K562 (cell line): ENCODE measurements at regions of chr1 and their contacts with region 1.

Region 1: GRCh38 chr1:173269490-173270230 is 62.5 kb upstream of the TNFSF4 start:
- DNase-seq: peak in 2 of 4 experiments; percentile 63 to 69
- ATAC-seq: peak; percentile 97
- H3K4me3 ChIP-seq: no peak overlapping the region
- H3K27ac ChIP-seq: peak overlapping the region; percentile 52; the same call in 2 of the 3 replicates
- H3K4me1 ChIP-seq: peaks cover 0 to 29% of the 10 kb centered on the region in 2 experiments; a peak in 3 of 5 replicates
- H3K27me3 ChIP-seq: no peaks in the 10 kb centered on the region
- CTCF ChIP-seq: no peak
- EP300 ChIP-seq: peak; percentile 90
- POLR2A ChIP-seq: no peak
- RAD21 ChIP-seq: peak; percentile 25 to 41

Region 2: GRCh38 chr1:173301507-173301906 is 31.8 kb after region 1 on chr1:
- CTCF ChIA-PET with region 1: no interaction called
- POLR2A ChIA-PET with region 1: no interaction called
- in situ Hi-C with region 1: no loop called
- intact Hi-C with region 1: loop called (anchors 5 kb)
- DNase-seq: peak; percentile 25 to 59 (median 30)
- ATAC-seq: peak; percentile 61
- H3K4me3 ChIP-seq: no peak overlapping the region
- H3K27ac ChIP-seq: no peak overlapping the region
- H3K4me1 ChIP-seq: peaks cover 5 to 39% of the 10 kb centered on the region in 2 experiments
- H3K27me3 ChIP-seq: no peaks in the 10 kb centered on the region
- CTCF ChIP-seq: no peak
- EP300 ChIP-seq: no peak
- POLR2A ChIP-seq: no peak
- RAD21 ChIP-seq: no peak

Region 3: DNA sequence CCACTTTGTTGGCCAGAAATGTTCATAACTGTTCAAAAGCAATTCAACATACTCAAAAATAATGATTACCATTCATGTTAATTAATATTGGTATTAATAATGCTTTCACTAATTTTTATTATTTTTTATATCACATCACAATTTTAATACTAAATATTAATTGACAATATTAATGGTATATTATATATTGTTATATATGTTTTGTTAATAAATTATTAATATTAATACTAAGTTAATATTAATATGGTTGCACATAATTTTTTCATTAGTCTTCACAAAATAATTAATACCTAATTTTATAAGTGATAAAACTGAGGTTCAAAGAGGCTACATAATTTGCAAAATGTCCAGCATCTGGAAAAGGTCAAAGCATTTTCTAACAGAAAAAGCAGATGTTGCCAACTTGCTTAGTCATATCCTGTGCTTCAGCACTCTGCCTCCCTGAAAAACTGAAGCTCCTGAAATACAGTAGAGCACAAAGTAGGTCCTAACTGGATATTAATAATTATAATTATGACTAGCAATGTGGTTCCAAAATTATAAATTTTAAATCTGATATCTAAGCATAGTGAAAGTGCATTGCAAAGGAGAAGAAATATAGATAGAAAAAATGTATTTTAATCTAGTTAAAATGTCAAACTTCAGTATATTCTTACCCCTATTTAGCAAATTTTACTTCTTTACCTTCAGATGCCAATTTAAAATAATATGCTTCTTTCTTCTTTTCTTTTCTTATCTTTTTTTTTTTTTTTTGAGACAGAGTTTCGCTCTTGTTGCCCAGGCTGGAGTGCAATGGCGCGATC is 60.7 kb after region 1 on chr1:
- CTCF ChIA-PET with region 1: no interaction called
- POLR2A ChIA-PET with region 1: no interaction called
- in situ Hi-C with region 1: no loop called
- intact Hi-C with region 1: loop called (anchors 5 kb)
- DNase-seq: peak; percentile 21 to 84 (median 47)
- ATAC-seq: peak; percentile 91
- H3K4me3 ChIP-seq: no peak overlapping the region
- H3K27ac ChIP-seq: peak overlapping the region; percentile 75; the same call in 2 of the 3 replicates
- H3K4me1 ChIP-seq: peaks cover 0 to 32% of the 10 kb centered on the region in 2 experiments; a peak in 4 of 5 replicates
- H3K27me3 ChIP-seq: no peaks in the 10 kb centered on the region
- CTCF ChIP-seq: no peak
- EP300 ChIP-seq: peak; percentile 87
- POLR2A ChIP-seq: no peak
- RAD21 ChIP-seq: no peak; a peak in 1 of 4 replicates

Region 4: DNA sequence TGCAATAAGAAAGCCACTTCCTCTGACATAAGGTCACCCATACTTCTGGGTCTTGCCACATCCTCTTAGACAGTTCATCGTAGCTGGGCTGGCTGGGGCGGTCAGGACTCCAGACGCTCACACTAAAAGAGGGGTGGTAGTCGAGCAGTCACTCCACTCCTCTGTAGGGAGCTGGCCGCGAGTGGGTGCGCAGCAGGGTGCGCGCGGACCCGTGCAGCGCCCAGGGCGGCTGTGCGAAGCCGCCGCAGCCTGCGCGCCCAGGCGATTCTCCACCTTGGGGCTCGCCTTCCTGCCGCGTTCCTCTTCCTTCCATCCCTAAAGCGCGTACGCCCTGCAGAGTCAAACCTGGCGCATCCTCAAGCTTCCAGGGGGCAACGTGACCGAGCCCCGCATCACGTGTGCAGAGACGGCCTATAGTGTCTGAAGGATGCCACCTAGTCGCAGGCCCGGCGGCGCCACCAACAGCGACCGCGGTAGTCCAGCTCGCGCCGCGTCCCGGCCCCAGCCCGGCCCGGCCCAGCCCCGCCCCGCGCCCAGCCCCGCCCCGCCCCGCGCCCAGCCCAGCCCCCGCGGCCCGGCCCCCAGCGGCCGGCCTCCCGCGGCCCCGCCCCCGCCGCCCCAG is 207.1 kb after region 1 on chr1:
- CTCF ChIA-PET with region 1: no interaction called
- POLR2A ChIA-PET with region 1: no interaction called
- in situ Hi-C with region 1: no loop called
- intact Hi-C with region 1: loop called (anchors 5 kb)
- DNase-seq: peak; percentile 96 to 97 (median 96)
- ATAC-seq: peak; percentile 90
- H3K4me3 ChIP-seq: peak overlapping the region; percentile 89
- H3K27ac ChIP-seq: peak overlapping the region; percentile 82
- H3K4me1 ChIP-seq: peaks cover 11 to 34% of the 10 kb centered on the region in 2 experiments
- H3K27me3 ChIP-seq: no peaks in the 10 kb centered on the region
- CTCF ChIP-seq: peak in 1 of 3 experiments; percentile 17; a peak in 1 of 6 replicates
- EP300 ChIP-seq: no peak; the same call in 1 of the 2 replicates
- POLR2A ChIP-seq: 0 out of 2 replicates have a peak, but pooled peaks have one; percentile 54
- RAD21 ChIP-seq: peak in 1 of 2 experiments; percentile 32; a peak in 2 of 4 replicates